Activated CD4-positive, alpha-beta memory T cell treated with anti-CD3 and anti-CD28 coated beads, Interleukin-2, amount 10 ng/mL, durations not matched to agents 7 days and 5 days (primary cell): ENCODE measurements at regions of chr3 and their contacts with region 1.

Region 1: GRCh38 chr3:28328188-28329151 is 20.1 kb upstream of the ZCWPW2 start:
- DNase-seq: no peak
- H3K4me3 Mint-ChIP-seq: no peak overlapping the region
- H3K27ac Mint-ChIP-seq: no peak overlapping the region
- H3K4me1 Mint-ChIP-seq: peaks cover 36% of the 10 kb centered on the region
- H3K27me3 Mint-ChIP-seq: no peaks in the 10 kb centered on the region

Region 2: DNA sequence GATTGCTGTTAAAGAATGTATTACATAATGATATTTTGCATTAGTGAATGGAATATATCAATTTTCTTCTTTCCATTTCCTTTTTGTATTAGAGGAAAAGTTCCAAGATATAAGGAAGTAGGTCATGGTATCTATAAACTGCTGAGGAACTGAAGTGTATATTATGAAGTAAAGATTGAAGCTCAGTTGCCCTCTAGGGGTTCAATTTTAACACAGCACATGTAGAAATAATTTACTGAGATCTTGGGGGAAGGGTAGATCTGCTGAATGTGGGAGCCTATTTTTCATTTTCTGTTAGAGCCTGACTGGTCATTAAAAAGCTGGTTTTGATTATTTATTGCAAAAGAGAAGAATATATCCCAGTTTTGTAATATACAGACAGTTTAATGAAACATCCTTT is 41.9 kb before region 1 on chr3:
- CTCF ChIA-PET with region 1: interaction called, 11 read pairs
- POLR2A ChIA-PET with region 1: no interaction called
- DNase-seq: no peak
- H3K4me3 Mint-ChIP-seq: no peak overlapping the region
- H3K27ac Mint-ChIP-seq: no peak overlapping the region
- H3K4me1 Mint-ChIP-seq: peaks cover 5% of the 10 kb centered on the region
- H3K27me3 Mint-ChIP-seq: no peaks in the 10 kb centered on the region

Region 3: GRCh38 chr3:28317438-28318022 is 10.9 kb before region 1 on chr3:
- CTCF ChIA-PET with region 1: interaction called, 36 read pairs
- POLR2A ChIA-PET with region 1: interaction called, 9 read pairs
- DNase-seq: peak; percentile 37
- H3K4me3 Mint-ChIP-seq: no peak overlapping the region
- H3K27ac Mint-ChIP-seq: no peak overlapping the region
- H3K4me1 Mint-ChIP-seq: peaks cover 10% of the 10 kb centered on the region
- H3K27me3 Mint-ChIP-seq: no peaks in the 10 kb centered on the region